PC-3 (cell line): ENCODE measurements at regions of chr4 and their contacts with region 1.

Region 1: GRCh38 chr4:151627491-151627890 is 133.3 kb downstream of the GATB start:
- DNase-seq: peak; percentile 38
- ATAC-seq: peak; percentile 40; the same call in 1 of the 2 replicates
- H3K4me3 ChIP-seq: no peak overlapping the region
- H3K27ac ChIP-seq: no peak overlapping the region
- H3K4me1 ChIP-seq: peaks cover 21% of the 10 kb centered on the region
- H3K27me3 ChIP-seq: no peaks in the 10 kb centered on the region
- CTCF ChIP-seq: no peak

Region 2: DNA sequence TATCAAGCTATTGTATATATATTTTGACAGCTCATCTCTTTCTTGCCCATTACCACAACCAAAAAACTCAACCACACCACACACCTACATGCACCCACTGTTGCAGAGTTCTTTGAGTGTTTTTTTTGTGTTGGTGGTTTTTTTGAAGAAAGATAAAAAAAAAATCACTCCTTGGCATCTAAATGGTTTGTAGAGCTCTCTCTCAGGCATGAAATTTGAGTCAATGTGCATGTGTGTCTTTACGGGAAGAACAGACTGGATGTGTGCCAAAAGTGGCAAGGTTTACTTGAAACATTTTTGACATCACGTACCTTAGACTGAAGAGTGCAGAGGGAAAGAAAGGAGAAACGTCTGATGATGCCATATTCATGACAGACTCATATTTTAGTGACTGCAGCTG is 64.3 kb before region 1 on chr4:
- CTCF ChIA-PET with region 1: no interaction called
- POLR2A ChIA-PET with region 1: interaction called, 19 read pairs
- intact Hi-C with region 1: no loop called
- DNase-seq: peak; percentile 22
- ATAC-seq: no peak
- H3K4me3 ChIP-seq: no peak overlapping the region
- H3K27ac ChIP-seq: no peak overlapping the region
- H3K4me1 ChIP-seq: no peaks in the 10 kb centered on the region
- H3K27me3 ChIP-seq: no peaks in the 10 kb centered on the region
- CTCF ChIP-seq: no peak

Region 3: GRCh38 chr4:151641176-151641575 is 13.7 kb after region 1 on chr4:
- CTCF ChIA-PET with region 1: no interaction called
- POLR2A ChIA-PET with region 1: no interaction called
- intact Hi-C with region 1: no loop called
- DNase-seq: peak; percentile 33
- ATAC-seq: no peak
- H3K4me3 ChIP-seq: no peak overlapping the region
- H3K27ac ChIP-seq: 0 out of 2 replicates have a peak overlapping the region, but pooled peaks have one; percentile 7
- H3K4me1 ChIP-seq: peaks cover 6% of the 10 kb centered on the region
- H3K27me3 ChIP-seq: no peaks in the 10 kb centered on the region
- CTCF ChIP-seq: no peak

Region 4: GRCh38 chr4:151674804-151675391 is 47.4 kb after region 1 on chr4:
- CTCF ChIA-PET with region 1: no interaction called
- POLR2A ChIA-PET with region 1: no interaction called
- intact Hi-C with region 1: no loop called
- DNase-seq: no peak
- ATAC-seq: no peak
- H3K4me3 ChIP-seq: no peak overlapping the region
- H3K27ac ChIP-seq: no peak overlapping the region
- H3K4me1 ChIP-seq: peaks cover 11% of the 10 kb centered on the region
- H3K27me3 ChIP-seq: no peaks in the 10 kb centered on the region
- CTCF ChIP-seq: no peak